PC-9 (cell line): ENCODE measurements at regions of chr14 and their contacts with region 1.

Region 1: GRCh38 chr14:94001501-94002396 is 4.6 kb downstream of the CCDC197 start:
- DNase-seq: peak; percentile 25 to 67
- H3K4me3 ChIP-seq: no peak overlapping the region
- H3K27ac ChIP-seq: no peak overlapping the region
- H3K4me1 ChIP-seq: no peaks in the 10 kb centered on the region
- H3K27me3 ChIP-seq: no peaks in the 10 kb centered on the region
- CTCF ChIP-seq: peak; percentile 87

Region 2: GRCh38 chr14:93939304-93940229 is 62.2 kb before region 1 on chr14:
- CTCF ChIA-PET with region 1: no interaction called
- POLR2A ChIA-PET with region 1: no interaction called
- intact Hi-C with region 1: loop called (anchors 1 kb)
- DNase-seq: peak in 1 of 2 experiments; percentile 59
- H3K4me3 ChIP-seq: no peak overlapping the region
- H3K27ac ChIP-seq: no peak overlapping the region
- H3K4me1 ChIP-seq: peaks cover 39% of the 10 kb centered on the region
- H3K27me3 ChIP-seq: no peaks in the 10 kb centered on the region
- CTCF ChIP-seq: peak; percentile 76